ENCODE measurements at regions of chr2 and their contacts with region 1.

Region 1: GRCh38 chr2:177332041-177332991 is 60.3 kb upstream of the AGPS start:
- DNase-seq: peak; percentile 42
- CTCF ChIP-seq: peak; percentile 62

Region 2: GRCh38 chr2:177164584-177165052 is 167.7 kb before region 1 on chr2:
- in situ Hi-C with region 1: loop called (anchors 5 kb)
- DNase-seq: peak; percentile 60
- CTCF ChIP-seq: peak; percentile 98

Region 3: DNA sequence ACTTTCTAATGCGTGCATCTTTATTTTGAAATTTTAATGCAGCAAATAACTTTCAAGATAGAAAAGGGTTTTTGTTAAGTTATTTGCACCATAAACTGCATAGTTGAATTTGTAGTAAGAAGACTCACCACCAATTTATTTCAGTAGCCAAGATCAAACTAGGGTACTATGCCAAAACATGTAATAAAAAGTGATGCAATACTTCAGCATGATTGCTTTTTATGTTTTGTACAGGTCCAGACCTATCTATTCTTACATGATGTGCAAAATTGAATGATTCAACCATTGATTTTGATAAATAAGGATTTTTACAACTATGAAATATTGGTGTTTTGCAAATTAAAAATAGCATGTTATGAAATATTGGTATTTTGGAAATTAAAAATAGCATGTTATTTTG is 87.0 kb after region 1 on chr2:
- in situ Hi-C with region 1: loop called (anchors 10 kb)
- DNase-seq: no peak
- CTCF ChIP-seq: no peak

Region 4: GRCh38 chr2:177618255-177619253 is 286.2 kb after region 1 on chr2:
- in situ Hi-C with region 1: loop called (anchors 25 kb)
- DNase-seq: peak; percentile 92
- CTCF ChIP-seq: no peak

Region 5: GRCh38 chr2:177724398-177725287 is 392.3 kb after region 1 on chr2:
- in situ Hi-C with region 1: loop called (anchors 10 kb)
- DNase-seq: peak; percentile 35
- CTCF ChIP-seq: peak; percentile 85

Measured in GM13976 (cell line).